Right cardiac atrium (tissue), 5 donors: ENCODE measurements at regions of chr2 and their contacts with region 1.

Region 1: GRCh38 chr2:102020596-102021181 is 28.9 kb downstream of the IL1R2 start:
- DNase-seq: peak; percentile 90 to 95 (median 94)
- ATAC-seq: peak; percentile 91 to 94
- H3K4me3 ChIP-seq: no peak overlapping the region
- H3K27ac ChIP-seq: no peak overlapping the region
- H3K4me1 ChIP-seq: peaks cover 4% of the 10 kb centered on the region
- H3K27me3 ChIP-seq: no peaks in the 10 kb centered on the region

Region 2: GRCh38 chr2:101931404-101931803 is 89.3 kb before region 1 on chr2:
- intact Hi-C with region 1: no loop called
- DNase-seq: no peak
- ATAC-seq: no peak
- H3K4me3 ChIP-seq: no peak overlapping the region
- H3K27ac ChIP-seq: no peak overlapping the region
- H3K4me1 ChIP-seq: no peaks in the 10 kb centered on the region
- H3K27me3 ChIP-seq: no peaks in the 10 kb centered on the region

Region 3: DNA sequence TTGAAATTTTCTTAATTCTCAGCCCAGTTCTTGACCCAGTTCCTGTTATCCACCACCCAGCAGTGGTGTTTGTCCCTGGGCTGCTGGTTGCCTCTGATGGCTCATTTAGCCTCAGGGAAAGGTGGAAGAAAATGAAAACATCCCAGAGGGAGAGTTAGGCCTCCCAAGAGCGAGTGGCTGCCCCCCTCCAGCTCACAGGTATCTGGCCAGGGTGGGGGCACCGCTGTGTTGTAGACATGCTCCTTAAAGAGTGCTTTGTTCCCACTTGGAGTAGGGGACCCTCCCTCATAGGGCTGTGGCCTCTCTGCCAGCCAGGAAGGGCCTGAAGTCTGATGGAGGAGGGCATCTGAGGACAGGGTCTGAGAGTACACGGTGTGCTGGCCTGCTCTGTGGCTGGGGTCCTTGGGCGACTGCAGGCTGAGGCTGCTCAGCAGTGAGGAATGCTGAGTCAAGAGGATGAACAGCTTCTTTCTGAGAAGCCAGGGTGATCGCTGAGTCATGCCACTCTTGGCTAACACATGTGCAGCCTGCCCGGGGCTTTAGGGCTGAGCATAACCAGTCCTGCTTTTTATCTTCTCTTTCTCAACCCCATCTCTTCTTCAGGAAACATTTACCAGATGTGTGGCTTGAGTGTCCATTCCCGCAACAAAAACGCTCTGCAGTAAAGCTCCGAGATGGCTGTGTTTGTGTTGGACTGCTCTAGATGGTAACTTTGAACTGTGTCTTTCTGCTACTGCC is 43.4 kb after region 1 on chr2:
- intact Hi-C with region 1: loop called in 1 of 4 experiments (anchors 5 kb)
- DNase-seq: peak; percentile 91 to 94 (median 94)
- ATAC-seq: peak; percentile 92 to 93
- H3K4me3 ChIP-seq: no peak overlapping the region
- H3K27ac ChIP-seq: peak overlapping the region; percentile 92
- H3K4me1 ChIP-seq: peaks cover 31% of the 10 kb centered on the region
- H3K27me3 ChIP-seq: no peaks in the 10 kb centered on the region

Region 4: DNA sequence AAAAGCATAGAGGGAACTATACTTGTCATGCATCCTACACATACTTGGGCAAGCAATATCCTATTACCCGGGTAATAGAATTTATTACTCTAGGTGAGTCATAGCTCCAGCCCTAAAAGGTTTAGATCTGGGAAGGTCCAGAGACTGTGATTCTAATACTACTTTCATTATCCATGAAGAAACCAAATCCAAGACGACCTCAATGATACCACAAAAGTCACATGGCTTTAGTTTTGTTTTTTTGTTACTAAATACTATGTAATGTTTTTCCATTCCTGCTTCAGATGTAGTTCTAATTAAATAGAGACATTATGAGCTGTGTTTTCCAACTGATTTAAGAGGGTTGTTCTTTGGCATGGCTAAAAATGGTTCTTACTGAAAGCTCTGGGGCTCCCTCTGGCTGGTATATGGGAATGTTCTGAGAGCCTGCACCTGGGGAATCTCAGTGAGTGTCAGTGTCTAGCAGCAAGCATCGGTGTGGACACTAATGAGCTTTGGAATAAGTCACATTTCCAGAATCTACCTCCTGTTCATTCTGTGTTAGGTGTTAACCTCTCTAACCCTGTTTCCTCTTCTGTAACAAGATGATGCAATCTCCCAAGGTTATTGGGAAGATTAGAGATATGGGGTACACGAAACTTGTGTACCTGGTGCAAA is 145.6 kb after region 1 on chr2:
- intact Hi-C with region 1: loop called (anchors 2 to 5 kb)
- DNase-seq: no peak
- ATAC-seq: peak; percentile 78 to 89
- H3K4me3 ChIP-seq: no peak overlapping the region
- H3K27ac ChIP-seq: no peak overlapping the region
- H3K4me1 ChIP-seq: no peaks in the 10 kb centered on the region
- H3K27me3 ChIP-seq: no peaks in the 10 kb centered on the region

Region 5: DNA sequence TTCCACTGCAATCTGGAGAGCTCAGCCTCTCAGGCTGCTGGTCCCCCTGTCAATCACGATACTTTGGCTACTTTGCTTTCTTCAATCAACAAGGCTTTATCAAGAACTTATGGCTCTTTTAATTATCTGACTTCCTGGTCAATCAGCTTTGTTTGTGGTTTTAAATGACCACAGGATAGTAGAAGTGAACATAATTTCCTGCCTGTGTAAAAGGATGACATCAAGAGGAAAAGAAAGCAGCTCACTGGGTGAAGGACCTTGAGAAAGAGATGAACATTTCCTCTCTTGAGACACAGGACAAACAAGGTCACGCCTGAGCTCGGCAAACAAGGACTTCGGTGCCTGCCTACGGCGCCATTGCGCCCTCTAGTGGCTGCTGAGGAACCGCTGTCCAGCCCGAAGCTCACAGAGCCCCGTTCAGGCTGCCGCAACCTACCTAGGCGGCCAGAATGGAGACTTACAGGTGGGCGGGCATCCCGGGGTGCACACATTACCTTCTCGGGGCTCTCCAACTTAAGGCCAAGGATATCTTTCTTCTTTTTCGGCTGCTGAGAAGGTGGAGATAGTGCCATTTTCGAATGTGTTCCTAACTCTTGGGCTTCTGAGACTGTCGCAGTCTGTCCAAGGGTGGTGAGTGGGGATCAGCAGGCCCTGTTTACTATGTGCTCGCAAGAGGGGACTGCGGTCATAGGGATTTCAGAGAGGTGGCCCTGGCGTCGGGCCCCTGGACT is 220.1 kb after region 1 on chr2:
- intact Hi-C with region 1: loop called (anchors 2 to 5 kb)
- DNase-seq: peak; percentile 94 to 96 (median 96)
- ATAC-seq: peak; percentile 94
- H3K4me3 ChIP-seq: no peak overlapping the region
- H3K27ac ChIP-seq: peak overlapping the region; percentile 63
- H3K4me1 ChIP-seq: no peaks in the 10 kb centered on the region
- H3K27me3 ChIP-seq: no peaks in the 10 kb centered on the region

Region 6: DNA sequence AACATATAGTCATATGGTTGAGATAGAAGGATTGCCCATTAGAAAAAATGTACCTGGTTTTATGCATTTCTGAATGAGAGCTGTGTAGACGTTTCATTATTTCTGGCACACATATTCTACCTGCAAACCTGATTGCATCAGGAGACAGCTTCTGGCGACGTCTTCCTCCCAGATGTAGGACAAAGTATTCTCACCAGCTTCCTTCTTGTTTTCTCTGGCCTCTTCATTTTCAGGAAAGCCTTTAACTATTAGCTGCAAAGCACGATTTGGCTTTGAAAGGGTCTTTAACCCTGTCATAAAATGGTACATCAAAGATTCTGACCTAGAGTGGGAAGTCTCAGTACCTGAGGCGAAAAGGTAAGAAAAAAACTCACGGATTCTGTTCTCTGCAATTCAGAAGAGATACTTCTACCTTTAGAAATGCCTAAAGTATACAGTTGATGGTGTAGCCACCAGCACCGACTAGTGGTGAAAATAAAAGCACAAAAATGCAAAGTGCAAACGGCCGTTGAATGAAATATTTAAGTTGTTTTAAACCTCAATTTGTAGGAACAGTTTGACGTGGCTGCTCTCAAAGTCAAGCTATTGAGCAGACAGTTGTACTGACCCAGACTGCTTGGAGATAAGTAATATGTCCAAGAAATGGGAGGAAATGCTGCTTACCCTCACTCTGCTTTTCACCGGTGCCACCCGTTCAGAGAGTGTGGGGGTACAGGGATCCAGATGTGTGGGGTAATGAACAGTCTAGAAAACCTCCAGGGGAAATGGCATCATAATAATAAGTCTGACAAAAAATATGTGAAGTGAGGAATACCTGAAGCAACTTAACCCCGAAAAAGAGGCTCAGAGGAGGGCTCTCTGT is 422.5 kb after region 1 on chr2:
- intact Hi-C with region 1: loop called in 2 of 4 experiments (anchors 5 to 10 kb)
- DNase-seq: no peak
- ATAC-seq: peak in 1 of 2 donors; percentile 58
- H3K4me3 ChIP-seq: no peak overlapping the region
- H3K27ac ChIP-seq: no peak overlapping the region
- H3K4me1 ChIP-seq: no peaks in the 10 kb centered on the region
- H3K27me3 ChIP-seq: no peaks in the 10 kb centered on the region